ENCODE measurements at regions of chr10 and their contacts with region 1.

Region 1: DNA sequence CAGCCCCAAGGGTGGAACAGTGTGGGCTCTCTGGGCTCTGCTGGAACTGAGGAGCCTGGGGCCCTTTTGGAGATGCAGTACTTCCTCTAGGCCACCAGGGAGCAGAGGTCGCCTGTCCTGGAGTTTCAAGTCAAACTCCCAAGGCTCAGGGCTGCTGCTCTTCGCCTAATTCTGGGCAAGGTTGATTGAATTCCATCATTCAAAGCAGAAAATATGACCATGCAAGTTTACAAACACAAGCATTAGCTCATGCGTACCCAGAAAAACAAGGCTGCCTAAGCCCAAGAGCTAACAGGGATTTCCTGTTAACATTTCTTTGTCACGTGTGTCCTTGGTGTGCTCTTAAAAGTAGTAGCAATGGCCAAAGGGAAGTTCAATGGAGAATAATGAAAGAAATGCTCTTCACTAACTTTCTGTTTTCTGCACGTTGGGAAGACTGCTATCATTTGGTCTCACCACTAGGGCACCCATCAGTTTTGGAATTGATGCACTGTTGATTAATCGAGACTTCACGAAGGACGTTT is 20.1 kb downstream of the LDB3 start:
- DNase-seq: peak in 8 of 9 donors; percentile 26 to 55 (median 42)
- ATAC-seq: peak; percentile 83
- H3K4me3 ChIP-seq: no peak overlapping the region
- H3K4me3 Mint-ChIP-seq: peak overlapping the region in 5 of 10 donors; percentile 5 to 34 (median 16)
- H3K27ac ChIP-seq: no peak overlapping the region
- H3K27ac Mint-ChIP-seq: no peak overlapping the region
- H3K4me1 ChIP-seq: no peaks in the 10 kb centered on the region
- H3K4me1 Mint-ChIP-seq: peaks cover 0 to 13% (median 4%) of the 10 kb centered on the region in 7 donors
- H3K27me3 ChIP-seq: no peaks in the 10 kb centered on the region
- H3K27me3 Mint-ChIP-seq: peaks cover 0 to 4% (median 0%) of the 10 kb centered on the region in 5 donors

Region 2: GRCh38 chr10:86888585-86889381 is 200.3 kb after region 1 on chr10:
- CTCF ChIA-PET with region 1: no interaction called
- POLR2A ChIA-PET with region 1: no interaction called
- intact Hi-C with region 1: no loop called
- DNase-seq: no peak
- ATAC-seq: peak; percentile 53
- H3K4me3 ChIP-seq: no peak overlapping the region
- H3K4me3 Mint-ChIP-seq: no peak overlapping the region
- H3K27ac ChIP-seq: no peak overlapping the region
- H3K27ac Mint-ChIP-seq: no peak overlapping the region
- H3K4me1 ChIP-seq: no peaks in the 10 kb centered on the region
- H3K4me1 Mint-ChIP-seq: peaks cover 0 to 10% (median 0%) of the 10 kb centered on the region in 7 donors
- H3K27me3 ChIP-seq: no peaks in the 10 kb centered on the region
- H3K27me3 Mint-ChIP-seq: no peaks in the 10 kb centered on the region

Region 3: GRCh38 chr10:86899670-86900276 is 211.3 kb after region 1 on chr10:
- CTCF ChIA-PET with region 1: interaction called, 15 read pairs
- POLR2A ChIA-PET with region 1: no interaction called
- intact Hi-C with region 1: loop called (anchors 1 kb)
- DNase-seq: peak in 6 of 9 donors; percentile 10 to 32 (median 26)
- ATAC-seq: peak; percentile 46
- H3K4me3 ChIP-seq: no peak overlapping the region
- H3K4me3 Mint-ChIP-seq: no peak overlapping the region
- H3K27ac ChIP-seq: no peak overlapping the region
- H3K27ac Mint-ChIP-seq: no peak overlapping the region
- H3K4me1 ChIP-seq: no peaks in the 10 kb centered on the region
- H3K4me1 Mint-ChIP-seq: peaks cover 0 to 4% (median 0%) of the 10 kb centered on the region in 7 donors
- H3K27me3 ChIP-seq: no peaks in the 10 kb centered on the region
- H3K27me3 Mint-ChIP-seq: peaks cover 0 to 8% (median 0%) of the 10 kb centered on the region in 5 donors

Region 4: GRCh38 chr10:86960003-86960862 is 271.8 kb after region 1 on chr10:
- CTCF ChIA-PET with region 1: no interaction called
- POLR2A ChIA-PET with region 1: no interaction called
- intact Hi-C with region 1: loop called in 1 of 2 experiments (anchors 1 kb)
- DNase-seq: peak in 6 of 9 donors; percentile 9 to 50 (median 38)
- ATAC-seq: peak; percentile 79
- H3K4me3 ChIP-seq: no peak overlapping the region
- H3K4me3 Mint-ChIP-seq: no peak overlapping the region
- H3K27ac ChIP-seq: no peak overlapping the region
- H3K27ac Mint-ChIP-seq: peak overlapping the region in 1 of 9 donors; percentile 44
- H3K4me1 ChIP-seq: peaks cover 0 to 5% of the 10 kb centered on the region in 2 donors
- H3K4me1 Mint-ChIP-seq: peaks cover 0 to 6% (median 4%) of the 10 kb centered on the region in 7 donors
- H3K27me3 ChIP-seq: no peaks in the 10 kb centered on the region
- H3K27me3 Mint-ChIP-seq: no peaks in the 10 kb centered on the region

Region 5: DNA sequence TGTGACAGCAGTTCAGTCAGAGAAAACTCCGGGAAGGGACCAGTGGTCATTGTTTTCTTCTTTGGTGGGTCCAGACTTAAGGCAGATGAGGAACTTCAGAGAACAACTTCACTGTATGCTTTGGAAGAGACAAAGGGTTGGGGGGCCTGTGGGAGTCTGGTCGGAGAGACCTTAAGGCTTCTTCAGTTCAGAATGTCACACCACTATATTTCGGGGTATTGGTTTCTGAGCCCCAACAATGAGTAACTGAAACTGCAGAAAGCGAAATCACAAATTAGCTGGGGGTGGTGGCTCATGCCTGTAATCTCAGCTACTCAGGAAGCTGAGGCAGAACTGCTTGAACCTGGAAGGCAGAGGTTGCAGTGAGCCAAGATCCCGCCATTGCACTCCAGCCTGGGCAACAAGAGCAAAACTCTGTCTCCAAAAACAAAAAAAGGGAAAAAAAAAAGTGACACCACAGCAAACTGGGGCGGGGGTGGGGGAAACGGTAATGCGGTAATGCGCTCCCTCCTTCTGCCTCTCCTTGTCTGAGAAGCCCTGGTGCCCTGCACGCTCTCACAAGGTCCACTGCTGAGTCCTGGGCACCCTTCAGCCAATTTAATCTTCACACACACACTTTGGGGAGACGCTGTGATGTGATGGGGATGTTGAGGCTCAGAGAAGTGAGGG is 277.7 kb after region 1 on chr10:
- CTCF ChIA-PET with region 1: no interaction called
- POLR2A ChIA-PET with region 1: no interaction called
- intact Hi-C with region 1: loop called in 1 of 2 experiments (anchors 1 kb)
- DNase-seq: no peak
- ATAC-seq: peak; percentile 1
- H3K4me3 ChIP-seq: peak overlapping the region; percentile 38
- H3K4me3 Mint-ChIP-seq: peak overlapping the region; percentile 55 to 87 (median 80)
- H3K27ac ChIP-seq: peak overlapping the region; percentile 61
- H3K27ac Mint-ChIP-seq: peak overlapping the region; percentile 54 to 90 (median 67)
- H3K4me1 ChIP-seq: peaks cover 4 to 45% of the 10 kb centered on the region in 2 donors
- H3K4me1 Mint-ChIP-seq: peaks cover 10 to 47% (median 43%) of the 10 kb centered on the region in 7 donors
- H3K27me3 ChIP-seq: no peaks in the 10 kb centered on the region
- H3K27me3 Mint-ChIP-seq: peaks cover 0 to 22% (median 0%) of the 10 kb centered on the region in 5 donors